ENCODE measurements at regions of chr2 and their contacts with region 1.

Region 1: GRCh38 chr2:178450774-178451525 is at the starts of genes PJVK and PRKRA:
- DNase-seq: peak; percentile 96
- ATAC-seq: peak; percentile 93
- H3K4me3 Mint-ChIP-seq: peak within 1 kb of the TSS; percentile 85
- H3K27ac Mint-ChIP-seq: peak within 1 kb of the TSS; percentile 100
- H3K4me1 Mint-ChIP-seq: peaks cover 20% of the 10 kb centered on the region
- H3K27me3 Mint-ChIP-seq: no peaks in the 10 kb centered on the region
- CTCF ChIP-seq: no peak
- total RNA-seq, gene PJVK: 2.5 to 6.8 TPM (median 4.4 TPM) in 3 replicates
- total RNA-seq, gene PRKRA: 55.4 to 57.6 TPM (median 55.4 TPM) in 3 replicates

Region 2: DNA sequence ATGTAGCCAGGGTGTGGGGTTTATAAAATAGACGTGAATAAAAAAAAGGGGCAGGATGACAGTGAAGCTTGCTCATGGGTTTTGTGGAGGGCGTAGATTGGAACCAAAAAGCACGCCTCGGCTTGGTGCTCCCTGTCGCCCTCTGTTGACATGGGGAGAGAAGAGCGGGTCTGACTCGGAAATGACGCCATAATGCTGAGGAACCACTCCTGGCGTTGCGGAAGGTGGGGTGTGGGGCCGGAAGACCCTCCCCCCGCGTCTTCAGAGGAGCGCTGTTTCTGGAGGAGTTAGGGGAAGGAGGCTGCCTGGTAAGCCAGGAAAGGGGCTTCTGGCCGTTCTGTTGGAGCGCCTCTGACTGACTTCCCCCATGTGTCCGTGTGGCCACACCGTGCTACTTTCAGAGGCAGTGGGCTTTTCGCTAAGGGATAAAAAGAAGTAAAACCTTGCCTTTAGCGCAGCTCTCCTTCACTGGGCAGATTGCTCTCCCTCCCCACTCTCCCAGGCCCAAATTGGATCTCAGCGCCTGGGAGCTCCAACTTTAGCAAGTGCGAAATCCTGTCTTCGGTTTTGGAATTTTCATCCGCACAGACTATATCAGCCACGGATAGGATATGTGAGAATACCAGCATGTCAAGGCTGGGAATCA is 72.1 kb after region 1 on chr2:
- CTCF ChIA-PET with region 1: no interaction called
- POLR2A ChIA-PET with region 1: interaction called, 10 read pairs
- DNase-seq: peak; percentile 85
- ATAC-seq: peak; percentile 99
- H3K4me3 Mint-ChIP-seq: peak overlapping the region; percentile 92
- H3K27ac Mint-ChIP-seq: peak overlapping the region; percentile 91
- H3K4me1 Mint-ChIP-seq: peaks cover 5% of the 10 kb centered on the region
- H3K27me3 Mint-ChIP-seq: no peaks in the 10 kb centered on the region
- CTCF ChIP-seq: peak; percentile 62

Measured in WTC11 (cell line).